Activated T-helper 2 cell treated with anti-CD3 and anti-CD28 coated beads, Interferon-gamma antibody, Interleukin-2, Interleukin-4, amounts not matched to agents 10 μg/mL and 5 μg/mL and 100 μg/mL, durations not matched to agents 14 hours and 24 hours and 36 hours (primary cell): ENCODE measurements at regions of chr3 and their contacts with region 1.

Region 1: DNA sequence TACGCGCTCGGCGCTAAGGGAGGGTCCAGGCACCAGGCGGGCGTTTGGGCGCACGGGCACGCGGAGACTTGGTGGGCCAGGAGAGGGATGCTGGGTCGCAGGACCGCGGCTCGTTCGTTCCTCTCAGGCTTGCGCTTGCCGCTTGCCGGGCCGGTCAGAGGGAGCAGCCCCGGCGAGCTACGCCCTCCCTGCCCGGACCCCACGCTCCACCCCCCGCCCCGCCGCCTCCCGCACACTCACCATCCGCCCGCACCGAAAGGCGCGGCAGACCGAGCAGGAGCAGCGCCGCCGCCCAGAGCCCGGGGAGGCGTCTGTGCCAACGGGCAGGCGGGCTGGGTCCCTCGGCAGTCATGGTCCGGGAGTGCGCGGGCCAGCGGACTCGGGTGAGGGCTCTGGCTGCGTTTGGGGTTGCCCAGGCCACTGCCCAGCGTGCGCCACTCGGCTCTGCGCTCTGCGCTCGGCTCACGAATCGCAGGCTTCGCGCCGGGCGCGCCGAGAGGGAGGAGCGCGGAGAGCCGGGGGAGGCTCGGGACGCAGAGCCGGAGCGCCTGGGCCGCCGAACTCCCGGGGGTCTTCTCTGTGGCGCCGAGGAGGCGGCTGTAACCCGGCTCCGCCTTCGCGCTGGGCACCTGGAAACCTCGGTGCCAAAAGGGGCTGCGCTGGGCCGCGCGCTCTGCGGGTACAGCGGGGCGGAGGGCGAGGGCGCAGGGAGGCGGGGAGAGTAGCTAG is at the start of gene SUSD5:
- DNase-seq: no peak
- H3K4me3 Mint-ChIP-seq: no peak within 1 kb of the TSS
- H3K27ac Mint-ChIP-seq: no peak within 1 kb of the TSS
- H3K4me1 Mint-ChIP-seq: peaks cover 5% of the 10 kb centered on the region
- H3K27me3 Mint-ChIP-seq: peaks cover 57% of the 10 kb centered on the region
- total RNA-seq, gene SUSD5: not detected in 2 replicates

Region 2: DNA sequence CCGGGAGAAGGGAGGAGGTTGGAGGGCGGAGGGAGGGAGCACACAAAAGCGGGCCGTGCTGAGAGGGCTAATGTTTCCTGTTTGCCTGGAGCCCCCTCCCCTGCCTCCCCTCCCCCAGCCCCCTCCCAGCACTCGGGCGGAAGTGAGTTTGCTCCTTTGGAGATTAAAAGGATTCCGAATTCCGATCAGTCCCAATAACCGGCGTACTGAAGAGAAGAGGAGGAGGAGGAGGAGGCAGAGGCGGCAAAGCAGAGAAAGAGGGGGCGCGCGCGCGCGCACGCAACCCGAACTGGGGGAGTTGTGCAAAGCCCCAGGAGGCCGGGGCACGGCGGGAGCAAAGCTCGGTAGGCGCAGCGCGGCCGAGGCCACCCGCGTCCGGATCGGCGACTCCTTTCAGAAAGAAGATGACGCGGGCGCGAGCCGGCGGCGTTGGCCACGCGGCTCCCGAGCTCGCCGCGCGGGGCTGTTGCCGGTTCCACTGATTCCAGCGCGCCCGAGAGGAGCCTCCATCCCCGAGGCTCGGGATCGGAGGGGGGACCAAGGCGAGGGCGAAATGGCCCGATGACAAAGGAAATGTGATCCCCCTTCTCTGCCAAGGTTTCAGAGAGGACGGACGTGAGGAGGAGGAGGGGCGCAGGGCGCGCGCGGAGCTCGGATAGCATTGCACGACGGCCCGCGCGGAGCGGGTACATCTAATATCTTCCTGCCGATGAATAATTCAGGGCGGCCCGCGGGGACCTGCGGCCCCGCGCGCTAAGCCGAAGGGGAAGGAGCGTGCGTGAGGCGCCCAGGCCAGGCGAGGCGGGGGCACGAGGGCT is 402.0 kb before region 1 on chr3:
- intact Hi-C with region 1: loop called (anchors 5 kb)
- DNase-seq: peak; percentile 18
- H3K4me3 Mint-ChIP-seq: peak overlapping the region; percentile 70
- H3K27ac Mint-ChIP-seq: no peak overlapping the region
- H3K4me1 Mint-ChIP-seq: peaks cover 22% of the 10 kb centered on the region
- H3K27me3 Mint-ChIP-seq: peaks cover 66% of the 10 kb centered on the region

Region 3: GRCh38 chr3:33392703-33393125 is 174.1 kb after region 1 on chr3:
- intact Hi-C with region 1: no loop called
- DNase-seq: no peak
- H3K4me3 Mint-ChIP-seq: no peak overlapping the region
- H3K27ac Mint-ChIP-seq: no peak overlapping the region
- H3K4me1 Mint-ChIP-seq: peaks cover 14% of the 10 kb centered on the region
- H3K27me3 Mint-ChIP-seq: no peaks in the 10 kb centered on the region